Endothelial cell of umbilical vein (primary cell): ENCODE measurements at regions of chr12 and their contacts with region 1.

Region 1: DNA sequence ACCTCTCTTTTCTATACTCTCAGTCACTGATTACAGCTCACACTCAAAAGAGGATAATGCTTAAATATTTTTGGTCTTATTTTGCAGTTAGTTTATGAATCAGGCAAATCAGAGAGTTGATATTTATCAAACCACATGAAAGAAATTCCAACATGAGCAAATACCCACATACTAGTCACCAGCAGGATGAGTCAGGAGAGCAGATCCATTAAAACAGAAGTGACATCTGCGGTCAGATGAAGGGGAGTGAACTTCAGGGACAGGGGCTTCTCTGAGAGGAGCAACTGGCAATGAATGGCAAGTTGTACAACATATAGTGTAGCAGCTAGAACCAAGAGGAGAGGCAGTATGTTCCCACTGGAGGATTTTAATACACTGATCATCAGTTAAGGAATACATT is 258.7 kb downstream of the SYT10 start:
- DNase-seq: no peak
- H3K4me3 ChIP-seq: no peak overlapping the region
- H3K27ac ChIP-seq: no peak overlapping the region
- H3K4me1 ChIP-seq: no peaks in the 10 kb centered on the region
- H3K27me3 ChIP-seq: no peaks in the 10 kb centered on the region
- CTCF ChIP-seq: no peak
- POLR2A ChIP-seq: no peak

Region 2: DNA sequence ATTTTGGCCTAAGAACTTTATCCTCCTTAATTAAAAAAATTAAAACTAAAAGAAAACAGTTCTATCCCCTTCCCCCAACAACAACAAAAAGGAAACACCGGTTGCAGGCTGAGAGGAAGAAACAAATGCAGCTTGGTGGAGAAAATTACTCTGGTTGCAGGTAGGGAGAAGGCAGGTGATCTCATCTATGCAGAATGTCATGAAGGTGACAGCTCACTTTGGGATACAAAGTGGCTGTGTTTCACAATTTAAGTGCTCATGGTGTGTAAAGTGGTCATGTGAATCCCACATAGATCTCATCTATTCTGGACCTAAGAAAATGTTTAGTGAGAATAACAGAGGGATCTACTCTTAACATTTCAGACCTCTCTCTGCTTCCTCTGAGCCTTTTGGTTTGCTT is 64.6 kb before region 1 on chr12:
- CTCF ChIA-PET with region 1: no interaction called
- POLR2A ChIA-PET with region 1: no interaction called
- dilution Hi-C with region 1: no loop called
- intact Hi-C with region 1: loop called (anchors 10 kb)
- DNase-seq: no peak
- H3K4me3 ChIP-seq: no peak overlapping the region
- H3K27ac ChIP-seq: no peak overlapping the region
- H3K4me1 ChIP-seq: no peaks in the 10 kb centered on the region
- H3K27me3 ChIP-seq: no peaks in the 10 kb centered on the region
- CTCF ChIP-seq: no peak
- POLR2A ChIP-seq: no peak